Mucosa of descending colon (tissue), 3 donors: ENCODE measurements at regions of chr7 and their contacts with region 1.

Region 1: GRCh38 chr7:128209229-128210035 is 31.6 kb upstream of the LEP start:
- DNase-seq: peak; percentile 67 to 75 (median 71)
- ATAC-seq: peak; percentile 95
- H3K4me3 ChIP-seq: no peak overlapping the region
- H3K4me1 ChIP-seq: no peaks in the 10 kb centered on the region
- CTCF ChIP-seq: peak; percentile 97

Region 2: DNA sequence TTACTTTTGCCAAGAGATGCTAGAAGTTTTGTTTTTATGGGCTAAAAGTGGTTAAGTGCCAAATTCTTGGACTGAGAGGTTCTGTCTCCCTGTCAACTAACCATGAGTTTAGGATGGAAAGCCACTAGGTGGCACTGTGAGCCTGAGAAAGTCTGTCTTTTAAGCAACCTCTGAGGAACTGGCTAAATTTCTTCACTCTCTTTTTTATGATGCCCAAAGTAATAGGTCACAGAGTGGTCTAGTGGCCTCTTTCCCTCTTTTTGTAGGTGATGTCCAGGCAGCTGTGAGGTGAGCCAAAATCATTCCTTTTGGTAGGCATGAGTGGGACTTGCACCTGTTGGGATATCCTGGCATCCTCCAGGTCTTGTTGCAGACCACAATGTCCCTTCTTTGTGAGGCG is 500.6 kb before region 1 on chr7:
- intact Hi-C with region 1: loop called (anchors 2 to 5 kb)
- DNase-seq: peak in 1 of 3 donors; percentile 94
- ATAC-seq: peak; percentile 83
- H3K4me3 ChIP-seq: no peak overlapping the region
- H3K4me1 ChIP-seq: peaks cover 5% of the 10 kb centered on the region
- CTCF ChIP-seq: peak; percentile 18

Region 3: GRCh38 chr7:127776776-127777386 is 432.6 kb before region 1 on chr7:
- intact Hi-C with region 1: no loop called
- DNase-seq: no peak
- ATAC-seq: peak; percentile 62
- H3K4me3 ChIP-seq: no peak overlapping the region
- H3K4me1 ChIP-seq: no peaks in the 10 kb centered on the region
- CTCF ChIP-seq: no peak

Region 4: GRCh38 chr7:128135515-128136214 is 73.8 kb before region 1 on chr7:
- intact Hi-C with region 1: loop called (anchors 5 kb)
- DNase-seq: peak; percentile 61 to 68 (median 64)
- ATAC-seq: peak; percentile 99
- H3K4me3 ChIP-seq: no peak overlapping the region
- H3K4me1 ChIP-seq: peaks cover 16% of the 10 kb centered on the region
- CTCF ChIP-seq: peak; percentile 98